ENCODE measurements at regions of chr19 and their contacts with region 1.

Region 1: GRCh38 chr19:44356383-44357111 is at the start of gene ZNF112:
- DNase-seq: peak; percentile 84 to 98 (median 90)

Region 2: GRCh38 chr19:44401139-44402115 is 44.9 kb after region 1 on chr19 and contains the start of gene ZNF285:
- intact Hi-C with region 1: loop called (anchors 2 kb)
- DNase-seq: peak; percentile 84 to 98 (median 90)

Region 3: DNA sequence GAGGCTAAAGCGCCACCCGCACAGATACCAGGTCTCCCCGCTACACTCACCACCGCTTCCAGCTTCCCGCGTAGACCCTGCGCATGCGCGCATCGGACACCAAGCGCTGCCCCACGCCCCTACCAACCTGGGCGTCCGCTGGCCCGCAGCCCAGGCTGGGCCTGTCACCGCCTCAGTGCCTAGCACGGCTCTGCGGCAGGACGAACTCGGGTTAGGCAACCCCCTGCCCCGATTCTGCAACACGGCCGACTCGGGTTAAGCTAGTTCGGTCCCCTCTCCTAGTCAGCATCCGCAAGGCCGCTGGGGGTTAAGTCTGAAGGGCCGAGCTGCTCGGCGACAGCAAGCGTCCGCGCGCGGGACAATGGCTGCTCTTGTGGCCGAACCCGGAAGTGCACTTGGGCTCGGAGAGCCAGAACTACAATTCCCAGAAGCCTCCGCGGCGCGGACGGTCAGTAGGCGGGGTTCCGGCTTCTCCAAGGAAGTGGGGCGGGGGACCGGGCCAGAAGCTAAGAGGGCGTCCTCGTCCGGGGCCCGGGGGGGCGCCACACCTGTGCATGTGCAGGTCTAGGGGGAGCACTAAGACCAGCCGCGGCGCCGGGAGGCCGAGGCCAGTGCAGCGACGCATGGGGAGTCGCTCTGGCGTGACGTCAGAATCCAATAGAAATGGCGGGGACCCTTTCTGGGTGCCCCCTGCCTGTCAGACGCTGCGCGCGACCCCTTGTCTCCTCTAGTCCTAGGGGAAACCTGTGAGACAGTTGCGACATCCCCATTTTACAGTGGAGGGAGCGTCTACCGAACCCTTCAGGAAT is 143.8 kb after region 1 on chr19 and contains the start of gene ZNF180:
- intact Hi-C with region 1: loop called (anchors 10 kb)
- DNase-seq: peak; percentile 90 to 99 (median 96)